ENCODE measurements at regions of chr13 and their contacts with region 1.

Region 1: DNA sequence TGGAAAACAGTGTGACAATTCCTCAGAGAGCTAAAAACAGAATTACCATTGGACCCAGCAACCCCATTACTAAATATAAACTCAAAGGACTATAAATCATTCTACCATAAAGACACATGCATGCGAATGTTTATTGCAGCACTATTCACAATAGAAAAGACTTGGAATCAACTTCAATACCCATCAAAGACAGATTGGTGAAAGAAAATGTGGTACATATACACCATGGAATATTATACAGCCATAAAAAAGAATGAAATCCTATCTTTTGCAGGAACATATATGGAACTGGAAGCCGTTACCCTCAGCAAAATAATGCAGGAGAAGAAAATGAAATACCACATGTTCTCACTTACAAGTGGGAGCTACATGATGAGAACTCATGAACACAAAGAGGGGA is 20.8 kb upstream of the FGF14 start:
- DNase-seq: no peak
- H3K4me3 ChIP-seq: no peak overlapping the region
- H3K27ac ChIP-seq: no peak overlapping the region
- H3K4me1 ChIP-seq: no peaks in the 10 kb centered on the region
- H3K27me3 ChIP-seq: no peaks in the 10 kb centered on the region
- CTCF ChIP-seq: no peak
- POLR2A ChIP-seq: no peak

Region 2: GRCh38 chr13:102286326-102286725 is 136.4 kb before region 1 on chr13:
- CTCF ChIA-PET with region 1: no interaction called
- POLR2A ChIA-PET with region 1: no interaction called
- dilution Hi-C with region 1: no loop called
- intact Hi-C with region 1: no loop called
- DNase-seq: no peak
- H3K4me3 ChIP-seq: no peak overlapping the region
- H3K27ac ChIP-seq: no peak overlapping the region
- H3K4me1 ChIP-seq: no peaks in the 10 kb centered on the region
- H3K27me3 ChIP-seq: no peaks in the 10 kb centered on the region
- CTCF ChIP-seq: no peak
- POLR2A ChIP-seq: no peak

Region 3: DNA sequence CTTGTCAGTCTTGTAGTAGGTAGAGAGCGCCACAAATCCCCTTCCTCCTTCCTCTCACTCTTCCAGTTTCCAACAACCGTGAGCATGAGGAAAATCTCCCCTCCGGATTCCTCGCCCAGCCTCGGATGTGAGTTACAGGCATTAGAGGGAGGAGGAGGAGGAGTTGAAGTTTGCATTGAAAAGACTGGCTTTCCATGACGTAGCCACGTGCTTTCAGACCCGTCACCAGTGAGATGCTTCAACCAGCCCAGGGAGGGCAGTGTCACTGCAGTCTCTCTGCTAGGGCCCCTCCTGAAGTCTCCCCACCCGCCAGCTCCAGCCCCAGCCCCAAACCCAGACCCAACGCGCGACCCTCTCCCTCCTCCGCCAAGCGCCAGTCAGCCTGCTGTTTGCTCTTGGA is 20.4 kb before region 1 on chr13:
- CTCF ChIA-PET with region 1: no interaction called
- POLR2A ChIA-PET with region 1: no interaction called
- dilution Hi-C with region 1: no loop called
- intact Hi-C with region 1: no loop called
- DNase-seq: no peak
- H3K4me3 ChIP-seq: peak overlapping the region in 1 of 3 experiments; percentile 2
- H3K27ac ChIP-seq: no peak overlapping the region
- H3K4me1 ChIP-seq: peaks cover 3% of the 10 kb centered on the region
- H3K27me3 ChIP-seq: peaks cover 36 to 54% of the 10 kb centered on the region in 2 experiments
- CTCF ChIP-seq: no peak
- POLR2A ChIP-seq: no peak

Region 4: GRCh38 chr13:102440259-102440936 is 17.7 kb after region 1 on chr13:
- CTCF ChIA-PET with region 1: no interaction called
- POLR2A ChIA-PET with region 1: no interaction called
- dilution Hi-C with region 1: no loop called
- intact Hi-C with region 1: loop called (anchors 1 kb)
- DNase-seq: no peak
- H3K4me3 ChIP-seq: no peak overlapping the region
- H3K27ac ChIP-seq: no peak overlapping the region
- H3K4me1 ChIP-seq: no peaks in the 10 kb centered on the region
- H3K27me3 ChIP-seq: no peaks in the 10 kb centered on the region
- CTCF ChIP-seq: no peak
- POLR2A ChIP-seq: no peak

Region 5: DNA sequence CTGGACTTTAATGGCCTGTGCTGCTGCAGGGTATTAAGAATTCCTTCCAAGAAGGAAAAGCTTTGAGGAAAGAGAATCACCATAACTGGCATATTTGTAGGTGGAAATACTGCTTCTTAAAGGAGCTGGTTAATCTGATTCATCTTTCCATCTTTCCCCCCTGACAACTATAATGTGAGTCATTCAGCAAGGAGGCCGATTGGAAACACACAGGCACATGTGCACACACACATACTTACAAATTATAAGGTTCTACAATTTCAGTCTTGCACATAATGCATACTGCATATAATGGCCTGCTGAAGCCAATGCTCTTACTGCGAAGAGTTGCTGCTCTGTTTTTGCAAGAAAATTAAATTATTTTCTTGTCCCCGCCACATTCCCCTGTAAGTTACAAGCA is 95.3 kb after region 1 on chr13:
- CTCF ChIA-PET with region 1: no interaction called
- POLR2A ChIA-PET with region 1: no interaction called
- dilution Hi-C with region 1: no loop called
- intact Hi-C with region 1: no loop called
- DNase-seq: no peak
- H3K4me3 ChIP-seq: no peak overlapping the region
- H3K27ac ChIP-seq: no peak overlapping the region
- H3K4me1 ChIP-seq: no peaks in the 10 kb centered on the region
- H3K27me3 ChIP-seq: no peaks in the 10 kb centered on the region
- CTCF ChIP-seq: no peak
- POLR2A ChIP-seq: no peak

Measured in endothelial cell of umbilical vein (primary cell).